Right cardiac atrium (tissue), 5 donors: ENCODE measurements at regions of chr15 and their contacts with region 1.

Region 1: GRCh38 chr15:82709421-82710207 is at the start of gene AP3B2:
- DNase-seq: peak; percentile 75 to 91 (median 85)
- ATAC-seq: peak; percentile 96 to 98
- H3K4me3 ChIP-seq: peak within 1 kb of the TSS; percentile 62
- H3K27ac ChIP-seq: no peak within 1 kb of the TSS
- H3K4me1 ChIP-seq: peaks cover 4% of the 10 kb centered on the region
- H3K27me3 ChIP-seq: no peaks in the 10 kb centered on the region
- total RNA-seq, gene AP3B2: 0.20 to 2.0 (median 0.59) TPM

Region 2: DNA sequence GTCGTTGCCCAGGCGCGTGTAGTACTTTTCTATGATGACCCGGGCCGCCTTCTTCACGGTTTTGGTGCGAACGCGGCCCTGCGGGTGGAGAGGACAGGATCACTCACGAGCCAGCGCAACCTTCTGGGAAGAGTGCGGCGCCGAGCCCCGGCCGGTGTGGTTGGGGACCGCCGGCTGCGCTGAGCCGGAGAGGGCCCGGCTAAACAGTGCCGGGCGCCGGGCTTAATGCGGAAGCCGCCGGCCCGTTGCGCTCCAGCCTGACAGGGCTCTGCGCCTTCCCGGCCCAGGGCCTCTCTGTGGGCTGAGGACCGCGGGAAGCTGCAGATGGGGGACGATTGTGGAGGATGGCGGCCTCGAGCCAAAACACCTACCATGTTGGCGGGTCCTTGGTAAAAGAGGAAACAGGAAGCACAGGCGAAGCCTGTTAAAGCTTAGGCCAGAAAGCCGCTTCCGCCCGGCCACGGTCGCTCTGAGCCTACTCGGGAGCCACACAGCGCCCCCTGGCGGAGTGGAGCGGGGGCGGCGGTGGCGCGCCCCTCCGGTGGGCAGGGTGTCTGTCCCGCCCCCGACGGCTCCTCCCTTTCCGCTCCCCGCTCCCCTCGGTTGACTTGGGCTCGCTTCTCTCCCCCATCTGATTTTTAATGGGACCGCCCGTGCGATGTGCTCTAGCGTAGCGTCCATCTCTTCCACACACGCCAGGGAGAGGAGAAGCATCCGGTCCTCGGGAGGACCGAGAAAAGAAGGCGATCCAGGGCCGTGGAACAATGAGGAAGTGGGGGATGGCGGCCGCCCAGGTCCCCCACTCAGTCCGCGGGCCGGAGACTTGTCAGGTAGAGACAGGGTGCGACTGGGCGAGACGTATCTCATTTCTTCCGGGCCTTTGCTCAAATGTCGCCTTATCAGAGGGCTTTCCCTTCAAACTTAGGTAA is 169.3 kb before region 1 on chr15 and contains the start of gene RPS17:
- intact Hi-C with region 1: loop called in 1 of 4 experiments (anchors 10 kb)
- DNase-seq: peak; percentile 97 to 99 (median 99)
- ATAC-seq: peak; percentile 99
- H3K4me3 ChIP-seq: peak within 1 kb of the TSS; percentile 74
- H3K27ac ChIP-seq: peak within 1 kb of the TSS; percentile 80
- H3K4me1 ChIP-seq: peaks cover 4% of the 10 kb centered on the region
- H3K27me3 ChIP-seq: no peaks in the 10 kb centered on the region
- total RNA-seq, gene RPS17: 749 to 949 (median 824) TPM